Activated CD4-positive, alpha-beta T cell treated with anti-CD3 and anti-CD28 coated beads for 36 hours (primary cell): ENCODE measurements at regions of chr1 and their contacts with region 1.

Region 1: DNA sequence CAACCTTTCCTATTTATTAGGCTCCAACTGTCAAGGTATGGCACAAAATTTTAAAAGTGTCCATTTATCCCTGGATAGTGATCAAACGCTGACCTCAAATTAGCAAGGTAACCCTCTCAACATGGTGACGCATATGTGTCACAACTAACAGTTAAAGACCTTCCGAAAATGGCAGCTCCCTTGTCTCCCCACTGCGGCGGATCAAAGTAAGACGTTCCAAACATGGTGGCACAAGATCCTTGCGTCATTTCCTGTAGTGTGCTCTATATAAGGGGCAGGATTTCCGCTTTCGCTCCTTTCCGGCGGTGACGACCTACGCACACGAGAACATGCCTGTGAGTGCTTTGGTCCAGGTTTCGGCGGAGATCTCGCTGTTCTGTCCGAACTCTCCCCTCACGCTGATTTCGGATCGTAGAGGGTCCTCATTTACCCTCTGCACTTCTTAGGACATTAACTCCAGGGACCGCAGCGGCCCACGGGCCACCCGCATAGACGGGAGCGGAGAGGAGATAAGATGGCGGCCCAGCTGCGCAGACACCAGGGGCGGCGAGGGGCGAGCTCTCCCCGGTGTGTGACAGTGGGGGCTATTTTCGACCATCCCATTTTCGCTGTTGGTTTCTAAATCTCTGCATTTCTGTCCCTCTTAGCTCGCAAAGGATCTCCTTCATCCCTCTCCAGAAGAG is at the start of gene RPS27:
- DNase-seq: peak; percentile 91
- ATAC-seq: peak; percentile 90
- H3K4me3 Mint-ChIP-seq: peak within 1 kb of the TSS; percentile 93
- H3K27ac Mint-ChIP-seq: peak within 1 kb of the TSS; percentile 96
- H3K4me1 Mint-ChIP-seq: peaks cover 49% of the 10 kb centered on the region
- H3K27me3 Mint-ChIP-seq: no peaks in the 10 kb centered on the region
- total RNA-seq, gene RPS27: 1,867 to 2,094 TPM

Region 2: GRCh38 chr1:153670859-153671627 is 319.6 kb before region 1 on chr1 and contains the start of gene ILF2:
- CTCF ChIA-PET with region 1: interaction called, 5 read pairs
- POLR2A ChIA-PET with region 1: interaction called, 5 read pairs
- intact Hi-C with region 1: loop called (anchors 1 kb)
- DNase-seq: peak; percentile 99
- ATAC-seq: peak; percentile 92
- H3K4me3 Mint-ChIP-seq: no peak within 1 kb of the TSS
- H3K27ac Mint-ChIP-seq: no peak within 1 kb of the TSS
- H3K4me1 Mint-ChIP-seq: peaks cover 34% of the 10 kb centered on the region
- H3K27me3 Mint-ChIP-seq: no peaks in the 10 kb centered on the region
- total RNA-seq, gene ILF2: 325 to 435 TPM

Region 3: DNA sequence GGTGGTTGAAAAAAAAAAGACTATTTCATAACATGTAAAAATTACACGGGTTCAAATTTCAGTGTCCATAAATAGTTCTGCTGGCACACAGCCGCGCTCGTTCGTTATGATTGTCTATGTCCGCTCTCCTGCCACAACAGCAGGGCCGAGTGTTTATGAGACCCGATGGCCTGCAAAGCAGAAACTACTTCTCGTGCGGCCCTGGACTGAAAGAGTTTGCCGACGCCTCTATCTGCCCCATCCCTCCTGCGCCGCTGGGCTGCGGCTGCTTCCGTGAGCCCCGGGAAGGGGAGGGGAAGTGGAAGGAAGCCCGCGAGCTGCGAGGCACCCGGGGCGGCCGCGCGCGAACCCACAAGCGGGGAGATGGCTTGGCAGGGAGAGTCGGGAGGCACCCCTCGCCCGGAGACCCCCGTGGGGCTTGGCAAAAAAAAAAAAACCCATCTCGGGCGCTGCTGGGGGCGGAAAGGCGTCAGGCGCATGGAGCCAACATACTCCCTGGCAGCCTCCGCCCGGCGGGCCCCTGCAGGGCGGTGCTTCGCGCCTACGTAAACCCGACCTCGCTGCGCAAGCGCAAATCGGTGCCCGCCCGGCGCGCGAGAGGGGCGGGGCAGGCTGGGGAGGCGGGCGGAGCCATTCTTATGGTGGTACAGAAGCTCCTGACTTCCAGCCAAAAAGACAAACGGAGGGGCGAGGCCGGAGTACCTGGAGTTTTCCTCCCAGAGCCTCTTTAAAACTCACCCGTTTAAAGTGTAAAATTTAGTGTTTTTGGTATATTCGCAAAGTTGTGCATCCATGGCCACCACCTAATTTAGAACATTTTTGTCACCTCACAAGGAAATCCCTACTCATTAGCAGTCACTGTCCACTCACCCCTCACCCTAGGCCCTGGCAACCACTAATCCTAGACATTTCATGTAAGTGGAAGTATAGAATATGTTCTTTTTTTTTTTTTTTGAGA is 207.1 kb before region 1 on chr1:
- CTCF ChIA-PET with region 1: interaction called, 6 read pairs
- POLR2A ChIA-PET with region 1: interaction called, 3 read pairs
- intact Hi-C with region 1: loop called in 1 of 2 experiments (anchors 1 kb)
- DNase-seq: peak; percentile 95
- ATAC-seq: peak; percentile 96
- H3K4me3 Mint-ChIP-seq: peak overlapping the region; percentile 90
- H3K27ac Mint-ChIP-seq: peak overlapping the region; percentile 97
- H3K4me1 Mint-ChIP-seq: peaks cover 12% of the 10 kb centered on the region
- H3K27me3 Mint-ChIP-seq: no peaks in the 10 kb centered on the region

Region 4: DNA sequence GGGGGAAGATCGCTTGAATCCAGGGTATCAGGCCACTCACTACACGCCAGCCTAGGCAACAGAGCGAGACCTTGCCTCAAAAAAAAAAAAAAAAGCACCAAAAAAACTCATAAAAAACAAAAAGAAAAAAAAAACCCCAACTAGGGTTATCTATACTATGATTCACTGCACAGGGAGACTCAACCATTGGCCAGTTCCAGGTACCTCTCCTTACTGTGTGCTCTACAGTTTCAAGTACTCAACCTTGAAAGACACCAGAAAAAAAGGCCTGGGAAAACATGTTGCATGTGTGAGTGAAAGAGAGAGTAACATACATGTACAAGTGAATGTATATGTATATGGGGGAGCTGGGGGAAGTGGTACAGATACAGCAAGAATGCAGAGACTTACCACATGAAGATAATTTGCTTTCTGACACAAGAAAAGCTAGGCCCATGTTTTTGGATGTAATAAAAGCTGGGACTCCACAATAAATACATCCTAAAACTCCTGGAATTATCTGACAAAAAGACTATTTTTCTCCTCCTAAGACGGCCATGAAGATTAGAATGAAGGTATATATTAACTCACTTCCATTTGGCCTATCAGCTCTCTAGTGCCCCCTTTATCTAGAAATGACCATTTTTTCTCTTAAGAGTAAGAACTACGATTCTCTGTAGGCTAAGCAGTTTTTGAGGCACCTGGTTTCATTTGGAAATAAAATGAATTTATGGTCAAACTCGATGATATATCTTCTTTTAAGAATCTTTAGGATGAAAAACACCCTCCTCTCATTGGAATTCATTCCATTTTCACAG is 163.2 kb before region 1 on chr1:
- CTCF ChIA-PET with region 1: interaction called, 3 read pairs
- POLR2A ChIA-PET with region 1: interaction called, 17 read pairs
- intact Hi-C with region 1: no loop called
- DNase-seq: no peak
- ATAC-seq: peak; percentile 80
- H3K4me3 Mint-ChIP-seq: no peak overlapping the region
- H3K27ac Mint-ChIP-seq: peak overlapping the region; percentile 47
- H3K4me1 Mint-ChIP-seq: peaks cover 7% of the 10 kb centered on the region
- H3K27me3 Mint-ChIP-seq: no peaks in the 10 kb centered on the region

Region 5: GRCh38 chr1:153936011-153936802 is 54.4 kb before region 1 on chr1:
- CTCF ChIA-PET with region 1: no interaction called
- POLR2A ChIA-PET with region 1: no interaction called
- intact Hi-C with region 1: no loop called
- DNase-seq: no peak
- ATAC-seq: no peak
- H3K4me3 Mint-ChIP-seq: no peak overlapping the region
- H3K27ac Mint-ChIP-seq: no peak overlapping the region
- H3K4me1 Mint-ChIP-seq: no peaks in the 10 kb centered on the region
- H3K27me3 Mint-ChIP-seq: no peaks in the 10 kb centered on the region

Region 6: GRCh38 chr1:153967082-153968000 is 23.3 kb before region 1 on chr1 and contains the start of gene CREB3L4:
- CTCF ChIA-PET with region 1: interaction called, 32 read pairs
- POLR2A ChIA-PET with region 1: interaction called, 41 read pairs
- intact Hi-C with region 1: loop called (anchors 1 to 2 kb)
- DNase-seq: peak; percentile 91
- ATAC-seq: peak; percentile 87
- H3K4me3 Mint-ChIP-seq: peak within 1 kb of the TSS; percentile 96
- H3K27ac Mint-ChIP-seq: peak within 1 kb of the TSS; percentile 96
- H3K4me1 Mint-ChIP-seq: peaks cover 38% of the 10 kb centered on the region
- H3K27me3 Mint-ChIP-seq: no peaks in the 10 kb centered on the region
- total RNA-seq, gene CREB3L4: 8.5 to 9.1 TPM

Region 7: GRCh38 chr1:154170547-154171222 is 180.1 kb after region 1 on chr1:
- CTCF ChIA-PET with region 1: interaction called, 3 read pairs
- POLR2A ChIA-PET with region 1: interaction called, 3 read pairs
- intact Hi-C with region 1: loop called in 1 of 2 experiments (anchors 2 kb)
- DNase-seq: peak; percentile 83
- ATAC-seq: peak; percentile 97
- H3K4me3 Mint-ChIP-seq: peak overlapping the region; percentile 27
- H3K27ac Mint-ChIP-seq: peak overlapping the region; percentile 86
- H3K4me1 Mint-ChIP-seq: peaks cover 53% of the 10 kb centered on the region
- H3K27me3 Mint-ChIP-seq: no peaks in the 10 kb centered on the region

Region 8: DNA sequence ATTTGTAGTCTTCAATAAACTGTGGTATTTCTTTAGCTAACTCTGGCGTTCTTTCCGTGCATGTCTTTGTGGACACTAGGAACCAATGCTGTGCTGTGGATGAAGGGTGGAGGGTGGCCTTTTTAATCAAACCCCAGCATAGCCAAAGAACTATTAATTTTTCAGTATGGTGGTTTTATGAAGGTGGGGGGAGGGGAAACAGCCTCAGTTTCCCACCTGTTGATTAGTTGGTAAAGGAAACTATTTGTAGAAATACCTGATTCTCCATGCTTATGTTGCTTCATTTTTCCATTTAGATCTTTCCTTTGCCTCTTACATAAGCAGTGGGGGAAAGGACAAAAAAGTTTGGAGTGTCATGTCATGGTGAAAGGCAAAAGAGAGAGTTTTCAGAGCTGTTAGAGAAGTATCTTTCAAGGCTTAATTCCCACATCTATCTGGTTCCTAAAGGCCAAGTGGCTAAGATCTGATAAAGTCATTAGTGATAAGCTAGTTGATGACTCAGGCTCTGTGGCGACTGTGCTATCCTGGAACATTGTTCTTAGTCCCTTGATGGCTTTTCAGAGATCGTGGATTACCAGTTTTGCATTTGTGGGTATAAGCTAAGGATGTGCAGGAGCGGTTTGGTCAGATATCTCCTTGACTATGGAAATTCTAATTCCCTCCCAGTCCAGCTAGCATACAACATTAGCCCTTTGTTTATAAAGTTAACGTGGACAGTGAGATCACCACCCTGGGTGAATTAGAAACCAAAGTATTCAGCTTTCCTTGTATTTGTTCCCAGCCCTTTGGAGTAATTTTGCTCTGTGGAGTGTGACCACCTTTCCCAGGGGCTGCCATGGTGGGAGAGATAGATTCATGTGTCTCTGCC is 273.1 kb after region 1 on chr1:
- CTCF ChIA-PET with region 1: no interaction called
- POLR2A ChIA-PET with region 1: no interaction called
- intact Hi-C with region 1: no loop called
- DNase-seq: no peak
- ATAC-seq: no peak
- H3K4me3 Mint-ChIP-seq: no peak overlapping the region
- H3K27ac Mint-ChIP-seq: peak overlapping the region; percentile 87
- H3K4me1 Mint-ChIP-seq: peaks cover 49% of the 10 kb centered on the region
- H3K27me3 Mint-ChIP-seq: no peaks in the 10 kb centered on the region

Region 9: DNA sequence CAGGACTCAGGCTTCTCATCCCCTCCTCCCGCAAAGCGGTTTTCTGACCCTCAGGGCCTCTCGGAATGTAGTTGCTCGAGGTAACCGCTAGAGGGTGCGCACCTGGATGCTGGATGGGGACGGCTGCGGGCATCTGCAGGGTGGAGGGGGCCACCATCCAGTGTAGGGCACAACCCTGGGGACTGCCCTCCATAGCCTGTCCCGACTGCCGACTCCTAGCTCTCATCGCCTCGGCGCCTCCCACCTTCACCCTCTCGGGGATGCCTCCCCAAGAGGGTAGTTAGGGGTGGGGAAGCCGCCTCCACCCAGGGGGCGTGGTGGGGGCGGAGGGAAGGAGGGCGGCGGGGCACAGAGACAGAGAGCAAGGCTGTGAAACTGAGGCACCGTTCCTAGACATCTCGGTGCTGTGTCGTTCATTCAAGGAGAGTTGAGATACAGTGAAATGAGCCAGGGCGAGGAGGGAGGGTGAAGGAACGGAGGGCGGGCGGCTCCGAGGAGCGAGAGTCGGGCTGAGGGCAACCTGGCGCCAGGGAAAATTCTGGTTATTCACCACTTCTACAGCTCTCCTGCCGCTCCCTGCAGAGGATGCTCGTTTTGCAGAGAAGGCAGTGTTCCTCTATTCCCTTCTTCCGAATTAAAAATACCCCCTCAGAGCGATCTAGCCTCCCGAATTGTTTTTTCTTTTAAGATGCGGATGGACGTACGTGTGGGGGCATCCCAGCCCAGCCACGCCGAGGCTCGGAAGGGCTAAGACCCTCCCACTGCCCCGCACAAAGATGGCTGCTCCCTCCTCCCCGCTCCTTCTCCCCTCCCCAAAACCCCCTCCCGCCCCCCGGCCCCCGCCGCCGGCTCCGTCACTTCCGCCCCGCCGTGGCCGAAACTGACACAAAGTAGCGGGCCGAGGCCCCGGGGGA is 334.3 kb after region 1 on chr1 and contains the start of gene ATP8B2:
- CTCF ChIA-PET with region 1: no interaction called
- POLR2A ChIA-PET with region 1: no interaction called
- intact Hi-C with region 1: loop called in 1 of 2 experiments (anchors 5 kb)
- DNase-seq: peak; percentile 92
- ATAC-seq: peak; percentile 70
- H3K4me3 Mint-ChIP-seq: peak within 1 kb of the TSS; percentile 99
- H3K27ac Mint-ChIP-seq: peak within 1 kb of the TSS; percentile 94
- H3K4me1 Mint-ChIP-seq: peaks cover 39% of the 10 kb centered on the region
- H3K27me3 Mint-ChIP-seq: no peaks in the 10 kb centered on the region
- total RNA-seq, gene ATP8B2: 48.2 TPM